PC-3 (cell line): ENCODE measurements at regions of chr1 and their contacts with region 1.

Region 1: GRCh38 chr1:248837794-248838356 is at the start of gene ZNF672:
- DNase-seq: peak; percentile 100
- ATAC-seq: peak; percentile 84
- H3K4me3 ChIP-seq: peak within 1 kb of the TSS; percentile 77
- H3K27ac ChIP-seq: peak within 1 kb of the TSS; percentile 75
- H3K4me1 ChIP-seq: peaks cover 20% of the 10 kb centered on the region
- H3K27me3 ChIP-seq: no peaks in the 10 kb centered on the region
- CTCF ChIP-seq: no peak
- total RNA-seq, gene ZNF672: 83.9 and 89.4 TPM in 2 replicates

Region 2: GRCh38 chr1:248858891-248859889 is 21.3 kb after region 1 on chr1 and contains the start of gene ZNF692:
- CTCF ChIA-PET with region 1: no interaction called
- POLR2A ChIA-PET with region 1: interaction called, 4 read pairs
- intact Hi-C with region 1: loop called (anchors 1 kb)
- DNase-seq: peak; percentile 100
- ATAC-seq: peak; percentile 78
- H3K4me3 ChIP-seq: peak within 1 kb of the TSS; percentile 75
- H3K27ac ChIP-seq: peak within 1 kb of the TSS; percentile 58
- H3K4me1 ChIP-seq: peaks cover 37% of the 10 kb centered on the region
- H3K27me3 ChIP-seq: no peaks in the 10 kb centered on the region
- CTCF ChIP-seq: no peak
- total RNA-seq, gene ZNF692: 71.9 and 85.4 TPM in 2 replicates

Region 3: GRCh38 chr1:248873409-248873992 is 35.6 kb after region 1 on chr1:
- CTCF ChIA-PET with region 1: no interaction called
- POLR2A ChIA-PET with region 1: no interaction called
- intact Hi-C with region 1: loop called (anchors 1 kb)
- DNase-seq: peak; percentile 100
- ATAC-seq: peak; percentile 84
- H3K4me3 ChIP-seq: peak overlapping the region; percentile 75
- H3K27ac ChIP-seq: peak overlapping the region; percentile 47
- H3K4me1 ChIP-seq: peaks cover 9% of the 10 kb centered on the region; the same call in 1 of the 2 replicates
- H3K27me3 ChIP-seq: no peaks in the 10 kb centered on the region
- CTCF ChIP-seq: 0 out of 2 replicates have a peak, but pooled peaks have one; percentile 26